H1 (cell line): ENCODE measurements at regions of chr11 and their contacts with region 1.

Region 1: DNA sequence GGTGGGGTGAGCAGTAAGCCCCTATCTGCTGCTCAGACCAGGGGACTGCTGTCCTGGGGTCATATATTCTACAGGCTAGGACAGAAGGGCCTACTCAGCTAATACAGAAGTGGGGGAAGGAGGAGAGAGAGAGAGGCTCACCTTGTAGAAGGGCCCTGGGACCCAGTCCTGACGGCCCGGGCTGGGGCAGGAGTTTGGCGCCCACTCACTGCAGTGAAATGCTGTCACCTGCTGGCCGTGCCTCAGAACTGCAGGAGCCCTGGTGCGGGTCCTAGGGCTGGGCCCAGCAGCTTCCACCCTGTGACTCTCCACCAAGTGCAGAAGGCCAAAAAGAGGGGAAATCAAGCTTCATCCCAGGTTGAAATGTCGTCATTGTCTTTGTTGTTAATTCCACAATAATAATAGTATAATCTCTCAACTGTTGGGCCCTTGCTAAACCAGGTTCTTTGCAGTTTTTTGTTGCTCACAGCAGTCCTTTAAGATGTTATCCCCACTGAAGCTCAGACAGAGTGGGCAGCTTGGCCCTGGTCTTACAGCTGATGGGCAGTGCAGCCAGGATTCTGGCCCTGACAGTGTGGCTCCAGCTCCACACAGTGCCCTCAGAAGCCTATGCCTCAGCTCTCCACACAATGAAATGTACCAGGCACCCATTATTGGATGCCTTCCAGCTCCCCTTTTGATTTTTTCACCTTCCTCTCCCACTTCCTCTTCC is 29.6 kb downstream of the TRIM29 start:
- DNase-seq: peak; percentile 46 to 94
- H3K4me3 ChIP-seq: no peak overlapping the region
- H3K27ac ChIP-seq: no peak overlapping the region
- H3K4me1 ChIP-seq: peaks cover 2 to 12% (median 7%) of the 10 kb centered on the region in 4 experiments
- H3K27me3 ChIP-seq: peaks cover 0 to 2% (median 1%) of the 10 kb centered on the region in 4 experiments; a peak in 2 of 7 replicates
- CTCF ChIP-seq: peak; percentile 98 to 99 (median 98)
- EP300 ChIP-seq: no peak
- POLR2A ChIP-seq: no peak
- RAD21 ChIP-seq: peak; percentile 100

Region 2: DNA sequence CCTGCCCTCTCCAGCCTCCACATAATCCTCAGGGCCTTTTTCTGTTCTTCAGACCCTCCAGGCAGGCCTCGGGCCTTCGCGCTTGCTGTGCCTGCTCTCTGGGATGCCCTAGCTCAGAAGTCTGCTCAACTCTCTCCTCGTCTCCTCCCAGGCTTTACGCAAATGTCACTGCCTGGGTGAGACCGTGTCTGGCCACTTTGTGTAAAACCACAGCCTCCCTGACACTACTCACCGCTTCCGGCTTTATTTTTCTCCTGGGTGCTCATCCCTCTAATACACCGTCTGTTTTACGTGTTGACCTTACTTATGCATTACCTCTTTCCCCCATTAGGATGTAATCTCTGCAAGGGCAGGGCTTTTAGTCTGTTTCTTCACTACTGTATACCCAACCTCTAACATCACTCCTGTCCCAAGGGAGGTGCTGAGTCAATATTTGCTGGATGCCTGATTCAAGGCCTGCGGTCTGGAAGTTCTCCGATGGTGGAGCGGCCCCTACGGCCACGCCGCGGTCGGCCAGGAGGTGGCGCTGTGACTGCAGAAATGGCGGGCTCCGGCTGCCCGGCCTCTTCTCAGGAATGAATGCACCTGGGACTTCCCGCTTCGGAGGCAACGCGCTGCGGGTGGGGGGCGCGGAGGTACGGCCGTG is 627.2 kb before region 1 on chr11:
- CTCF ChIA-PET with region 1: interaction called, 12 read pairs
- POLR2A ChIA-PET with region 1: no interaction called
- DNase-seq: peak in 1 of 2 experiments; percentile 100
- H3K4me3 ChIP-seq: peak overlapping the region in 2 of 4 experiments; percentile 19 to 50; a peak in 3 of 8 replicates
- H3K27ac ChIP-seq: no peak overlapping the region
- H3K4me1 ChIP-seq: 0 out of 7 replicates have a peak, but pooled peaks cover 0 to 2% (median 0%) of the 10 kb centered on the region in 4 experiments
- H3K27me3 ChIP-seq: no peaks in the 10 kb centered on the region; a peak in 2 of 7 replicates
- CTCF ChIP-seq: peak; percentile 95 to 98 (median 98)
- EP300 ChIP-seq: no peak
- POLR2A ChIP-seq: no peak
- RAD21 ChIP-seq: peak; percentile 97 to 98

Region 3: DNA sequence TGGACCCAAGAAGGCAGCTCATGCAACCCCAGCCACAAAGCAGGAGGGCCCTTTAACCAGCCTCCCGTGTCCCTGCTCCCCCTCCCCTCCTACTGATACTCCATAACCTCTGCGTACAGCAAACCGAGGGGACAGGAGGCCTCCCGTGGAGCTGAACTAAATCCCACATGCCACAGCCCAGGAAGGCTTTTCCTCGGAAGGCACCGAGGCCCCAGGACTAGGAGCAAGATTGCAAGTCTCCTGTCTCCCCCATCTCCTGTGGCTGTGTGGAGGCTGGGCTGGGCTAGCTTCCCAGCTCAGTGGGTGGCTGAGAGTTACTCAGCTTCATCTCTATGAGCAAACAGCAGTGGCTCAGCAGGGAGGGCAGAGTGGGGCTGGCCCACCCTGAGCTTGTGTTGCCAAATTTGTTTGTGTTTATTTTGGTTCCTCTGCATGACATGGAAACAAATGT is 316.6 kb before region 1 on chr11:
- CTCF ChIA-PET with region 1: interaction called, 14 read pairs
- POLR2A ChIA-PET with region 1: no interaction called
- DNase-seq: no peak
- H3K4me3 ChIP-seq: no peak overlapping the region
- H3K27ac ChIP-seq: no peak overlapping the region
- H3K4me1 ChIP-seq: peaks cover 18 to 48% (median 34%) of the 10 kb centered on the region in 4 experiments
- H3K27me3 ChIP-seq: peaks cover 2 to 55% (median 39%) of the 10 kb centered on the region in 4 experiments; a peak in 6 of 7 replicates
- CTCF ChIP-seq: no peak
- EP300 ChIP-seq: no peak
- POLR2A ChIP-seq: no peak
- RAD21 ChIP-seq: no peak

Region 4: GRCh38 chr11:119999220-119999619 is 109.1 kb before region 1 on chr11:
- CTCF ChIA-PET with region 1: interaction called, 68 read pairs
- POLR2A ChIA-PET with region 1: no interaction called
- DNase-seq: no peak
- H3K4me3 ChIP-seq: no peak overlapping the region
- H3K27ac ChIP-seq: no peak overlapping the region
- H3K4me1 ChIP-seq: peaks cover 0 to 11% (median 7%) of the 10 kb centered on the region in 4 experiments; a peak in 4 of 7 replicates
- H3K27me3 ChIP-seq: no peaks in the 10 kb centered on the region
- CTCF ChIP-seq: peak; percentile 43 to 57 (median 55)
- EP300 ChIP-seq: no peak
- POLR2A ChIP-seq: no peak
- RAD21 ChIP-seq: peak; percentile 69 to 78

Region 5: DNA sequence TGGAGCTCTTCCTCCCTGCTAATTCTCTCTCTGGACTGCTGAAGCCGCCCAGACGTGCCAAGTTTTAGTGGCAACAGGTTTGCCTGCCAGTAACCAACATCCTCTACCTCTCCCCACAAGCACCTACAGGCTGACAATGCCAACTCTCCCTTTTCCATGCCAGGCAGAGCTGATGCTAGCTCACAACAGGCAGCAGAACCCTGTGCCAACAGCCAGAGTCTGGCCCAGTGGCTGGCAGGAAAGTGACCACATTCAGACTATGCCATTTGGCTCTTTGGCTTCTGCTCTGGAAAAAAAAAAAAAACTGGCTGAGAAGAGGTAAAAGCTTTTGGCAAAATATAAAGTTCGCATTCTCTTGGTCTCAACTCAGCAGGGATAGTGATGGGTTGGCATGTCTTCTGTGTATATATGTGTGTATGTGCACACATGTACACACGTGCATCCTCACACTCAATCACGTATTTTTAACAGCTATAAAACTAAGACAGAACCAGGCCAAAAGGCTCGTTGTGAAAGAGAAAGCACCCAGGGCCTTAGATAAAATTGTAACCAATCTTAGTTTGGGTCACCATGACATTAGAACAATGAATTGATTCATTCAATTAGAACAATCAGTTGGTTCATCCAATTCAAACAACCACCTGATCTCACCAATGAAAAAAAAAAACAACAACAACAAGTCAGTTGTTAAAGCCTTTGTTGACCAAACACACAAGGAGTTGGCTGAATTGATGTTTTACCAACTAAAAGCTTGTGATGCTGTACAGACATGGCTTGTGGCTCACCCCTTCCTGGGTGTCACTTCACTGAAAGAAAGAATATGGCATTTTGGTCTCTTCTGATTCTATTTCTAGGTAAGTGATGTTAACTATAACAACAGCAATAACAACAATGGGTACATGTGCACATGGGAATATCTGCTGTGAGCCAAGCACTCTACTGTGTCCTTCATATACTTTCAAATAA is 19.0 kb before region 1 on chr11:
- CTCF ChIA-PET with region 1: interaction called, 45 read pairs
- POLR2A ChIA-PET with region 1: no interaction called
- DNase-seq: no peak
- H3K4me3 ChIP-seq: no peak overlapping the region
- H3K27ac ChIP-seq: no peak overlapping the region
- H3K4me1 ChIP-seq: peaks cover 0 to 3% (median 0%) of the 10 kb centered on the region in 4 experiments; a peak in 2 of 7 replicates
- H3K27me3 ChIP-seq: peaks cover 0 to 2% (median 1%) of the 10 kb centered on the region in 4 experiments; a peak in 1 of 7 replicates
- CTCF ChIP-seq: no peak
- EP300 ChIP-seq: no peak
- POLR2A ChIP-seq: no peak
- RAD21 ChIP-seq: no peak

Region 6: GRCh38 chr11:120147092-120147949 is 39.0 kb after region 1 on chr11:
- CTCF ChIA-PET with region 1: interaction called, 22 read pairs
- POLR2A ChIA-PET with region 1: no interaction called
- DNase-seq: peak in 1 of 2 experiments; percentile 41
- H3K4me3 ChIP-seq: no peak overlapping the region
- H3K27ac ChIP-seq: no peak overlapping the region
- H3K4me1 ChIP-seq: peaks cover 0 to 2% (median 0%) of the 10 kb centered on the region in 4 experiments; a peak in 1 of 7 replicates
- H3K27me3 ChIP-seq: peaks cover 0 to 7% (median under 1%) of the 10 kb centered on the region in 4 experiments; a peak in 3 of 7 replicates
- CTCF ChIP-seq: peak in 1 of 3 experiments; percentile 6; a peak in 1 of 4 replicates
- EP300 ChIP-seq: no peak
- POLR2A ChIP-seq: no peak
- RAD21 ChIP-seq: no peak